T-cell (primary cell): ENCODE measurements at regions of chr3 and their contacts with region 1.

Region 1: DNA sequence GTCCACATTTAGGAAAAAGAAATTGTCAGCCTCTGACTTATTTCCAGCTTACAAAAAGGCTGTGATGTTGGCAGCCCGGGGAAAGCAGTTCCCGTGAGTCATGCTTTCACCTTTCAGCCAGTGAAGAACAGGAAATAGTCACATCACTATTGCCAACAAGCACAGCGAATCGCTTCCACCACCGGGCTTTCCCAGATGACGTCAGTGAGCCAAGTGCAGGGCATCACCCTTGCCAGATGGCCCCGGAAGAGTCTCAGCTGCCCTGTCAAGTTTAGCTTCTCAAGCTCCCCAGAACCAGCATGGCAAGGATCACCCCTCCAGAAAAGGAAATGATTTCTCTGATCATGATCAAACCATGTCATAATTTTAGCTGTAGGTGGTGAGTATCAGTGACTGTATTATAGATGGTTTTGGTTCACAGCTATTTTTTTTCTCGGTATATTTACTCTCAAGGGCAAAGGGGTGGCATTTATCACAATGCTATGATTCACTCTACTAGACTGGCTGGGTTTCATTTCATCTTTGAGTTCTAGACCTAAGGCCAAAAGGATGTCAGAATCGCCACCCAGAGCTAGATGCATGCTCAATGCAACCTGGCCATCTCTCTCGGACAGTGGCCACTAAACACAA is 32.9 kb downstream of the B3GNT5 start:
- DNase-seq: peak; percentile 59 to 96 (median 90)
- ATAC-seq: peak; percentile 89 to 98 (median 96)
- H3K4me3 ChIP-seq: peak overlapping the region; percentile 1 to 9
- H3K4me3 Mint-ChIP-seq: peak overlapping the region; percentile 54 to 73 (median 57)
- H3K27ac ChIP-seq: peak overlapping the region; percentile 92
- H3K27ac Mint-ChIP-seq: peak overlapping the region; percentile 92 to 96
- H3K4me1 ChIP-seq: peaks cover 5 to 12% of the 10 kb centered on the region in 2 experiments
- H3K4me1 Mint-ChIP-seq: peaks cover 13 to 34% (median 33%) of the 10 kb centered on the region in 3 donors
- H3K27me3 ChIP-seq: peaks cover 0 to 5% of the 10 kb centered on the region in 2 experiments
- H3K27me3 Mint-ChIP-seq: no peaks in the 10 kb centered on the region

Region 2: DNA sequence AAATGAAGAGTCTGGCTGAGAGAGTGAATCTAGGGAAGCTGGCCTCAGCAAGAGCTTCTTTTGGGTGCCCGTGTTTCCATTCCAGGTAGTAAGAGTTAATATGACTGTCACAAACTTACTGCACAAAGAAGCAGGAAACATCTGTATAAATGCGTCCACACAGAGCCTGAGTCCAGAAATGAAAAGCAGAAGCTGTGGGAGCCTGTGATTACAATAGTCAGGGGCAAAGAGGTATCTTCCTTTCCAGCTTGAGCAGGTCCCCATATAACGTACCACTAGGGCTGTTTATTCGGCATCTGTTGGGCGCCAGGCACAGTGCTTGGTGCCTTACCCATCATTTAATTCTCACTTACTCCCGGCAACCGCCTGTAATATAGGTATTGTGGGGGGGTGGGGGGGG is 73.4 kb before region 1 on chr3:
- CTCF ChIA-PET with region 1: no interaction called
- POLR2A ChIA-PET with region 1: interaction called, 3 to 12 read pairs
- DNase-seq: no peak
- ATAC-seq: peak in 1 of 4 experiments; percentile 36
- H3K4me3 ChIP-seq: no peak overlapping the region
- H3K4me3 Mint-ChIP-seq: no peak overlapping the region
- H3K27ac ChIP-seq: no peak overlapping the region
- H3K27ac Mint-ChIP-seq: no peak overlapping the region
- H3K4me1 ChIP-seq: no peaks in the 10 kb centered on the region
- H3K4me1 Mint-ChIP-seq: peaks cover 0 to 2% (median 0%) of the 10 kb centered on the region in 3 donors
- H3K27me3 ChIP-seq: no peaks in the 10 kb centered on the region
- H3K27me3 Mint-ChIP-seq: no peaks in the 10 kb centered on the region